ENCODE measurements at regions of chr18 and their contacts with region 1.

Region 1: DNA sequence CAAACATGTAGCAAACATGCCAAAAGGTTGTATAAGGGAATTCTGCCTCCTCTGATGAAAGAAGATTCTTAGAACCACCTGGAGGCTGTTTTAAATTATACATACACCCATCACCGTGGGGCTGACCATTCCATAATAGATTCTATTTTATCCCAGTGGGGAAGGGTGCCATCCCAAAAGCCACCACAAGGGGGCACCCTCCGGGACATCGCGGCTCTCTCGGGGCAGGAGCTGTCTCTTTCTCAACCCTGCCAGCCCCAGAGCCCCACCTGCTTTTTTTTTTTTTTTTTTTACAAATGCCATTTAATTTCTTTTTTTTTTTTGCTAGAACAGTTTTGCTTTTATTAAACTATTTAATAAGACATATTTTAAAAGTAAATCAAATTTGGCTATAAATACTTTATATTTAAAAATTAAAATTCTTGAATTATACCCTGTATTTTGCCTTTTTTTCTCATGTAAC is 8.6 kb upstream of the MTCL1 start:
- DNase-seq: peak; percentile 66
- H3K4me3 ChIP-seq: no peak overlapping the region
- H3K27ac ChIP-seq: no peak overlapping the region
- H3K4me1 ChIP-seq: no peaks in the 10 kb centered on the region
- H3K27me3 ChIP-seq: peaks cover 0 to 2% of the 10 kb centered on the region in 2 experiments
- CTCF ChIP-seq: peak; percentile 83 to 89
- POLR2A ChIP-seq: no peak

Region 2: DNA sequence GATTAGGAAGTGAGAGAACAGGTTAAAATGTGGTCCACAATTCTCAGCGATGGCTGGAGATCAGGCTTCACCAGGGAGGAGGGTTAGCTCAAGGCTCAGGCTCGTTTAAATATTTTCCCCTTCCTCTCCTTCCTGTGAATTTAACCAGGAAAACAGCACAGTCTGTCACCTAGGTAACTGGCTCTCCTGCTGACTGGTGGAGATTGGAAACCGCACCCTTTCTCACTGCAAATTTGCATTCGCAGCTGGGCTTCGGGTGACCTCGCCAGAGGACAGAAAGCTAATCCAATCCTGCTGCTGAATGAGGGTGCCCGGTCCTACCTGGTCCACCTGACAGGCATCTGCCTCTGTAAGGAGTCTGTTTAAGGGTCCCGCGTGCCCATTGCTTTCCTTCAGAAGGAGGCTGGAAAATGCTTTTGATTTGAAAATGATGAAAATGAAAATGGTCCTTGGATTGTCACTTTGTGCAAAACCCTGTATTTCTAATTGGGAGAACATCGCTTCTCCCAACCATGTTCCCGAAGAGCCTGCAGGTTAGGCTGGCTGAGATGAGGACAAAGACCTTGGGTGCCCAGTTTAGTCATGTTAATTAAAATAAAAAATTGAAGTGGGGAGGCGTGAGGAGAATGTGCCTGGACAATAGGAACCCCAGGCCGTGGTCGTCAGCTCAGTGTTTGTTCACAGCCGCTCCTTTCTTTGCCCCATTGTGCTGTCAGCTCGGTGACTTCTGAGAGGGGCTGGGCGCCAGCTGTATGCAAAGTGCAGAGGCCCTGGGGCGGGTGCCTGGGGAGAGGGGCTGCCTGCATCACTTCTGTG is 34.8 kb before region 1 on chr18:
- CTCF ChIA-PET with region 1: interaction called, 40 read pairs
- POLR2A ChIA-PET with region 1: no interaction called
- dilution Hi-C with region 1: no loop called
- intact Hi-C with region 1: no loop called
- DNase-seq: peak; percentile 68
- H3K4me3 ChIP-seq: peak overlapping the region in 1 of 3 experiments; percentile 23
- H3K27ac ChIP-seq: peak overlapping the region; percentile 37
- H3K4me1 ChIP-seq: peaks cover 26% of the 10 kb centered on the region
- H3K27me3 ChIP-seq: no peaks in the 10 kb centered on the region
- CTCF ChIP-seq: no peak
- POLR2A ChIP-seq: no peak

Region 3: GRCh38 chr18:8675057-8675456 is 21.7 kb before region 1 on chr18:
- CTCF ChIA-PET with region 1: interaction called, 17 read pairs
- POLR2A ChIA-PET with region 1: no interaction called
- dilution Hi-C with region 1: no loop called
- intact Hi-C with region 1: no loop called
- DNase-seq: no peak
- H3K4me3 ChIP-seq: no peak overlapping the region
- H3K27ac ChIP-seq: no peak overlapping the region
- H3K4me1 ChIP-seq: no peaks in the 10 kb centered on the region
- H3K27me3 ChIP-seq: no peaks in the 10 kb centered on the region
- CTCF ChIP-seq: no peak
- POLR2A ChIP-seq: no peak

Region 4: GRCh38 chr18:8786478-8787370 is 89.9 kb after region 1 on chr18:
- CTCF ChIA-PET with region 1: interaction called, 10 read pairs
- POLR2A ChIA-PET with region 1: no interaction called
- dilution Hi-C with region 1: no loop called
- intact Hi-C with region 1: no loop called
- DNase-seq: no peak
- H3K4me3 ChIP-seq: no peak overlapping the region
- H3K27ac ChIP-seq: peak overlapping the region; percentile 61
- H3K4me1 ChIP-seq: peaks cover 19% of the 10 kb centered on the region
- H3K27me3 ChIP-seq: no peaks in the 10 kb centered on the region
- CTCF ChIP-seq: no peak
- POLR2A ChIP-seq: no peak

Region 5: DNA sequence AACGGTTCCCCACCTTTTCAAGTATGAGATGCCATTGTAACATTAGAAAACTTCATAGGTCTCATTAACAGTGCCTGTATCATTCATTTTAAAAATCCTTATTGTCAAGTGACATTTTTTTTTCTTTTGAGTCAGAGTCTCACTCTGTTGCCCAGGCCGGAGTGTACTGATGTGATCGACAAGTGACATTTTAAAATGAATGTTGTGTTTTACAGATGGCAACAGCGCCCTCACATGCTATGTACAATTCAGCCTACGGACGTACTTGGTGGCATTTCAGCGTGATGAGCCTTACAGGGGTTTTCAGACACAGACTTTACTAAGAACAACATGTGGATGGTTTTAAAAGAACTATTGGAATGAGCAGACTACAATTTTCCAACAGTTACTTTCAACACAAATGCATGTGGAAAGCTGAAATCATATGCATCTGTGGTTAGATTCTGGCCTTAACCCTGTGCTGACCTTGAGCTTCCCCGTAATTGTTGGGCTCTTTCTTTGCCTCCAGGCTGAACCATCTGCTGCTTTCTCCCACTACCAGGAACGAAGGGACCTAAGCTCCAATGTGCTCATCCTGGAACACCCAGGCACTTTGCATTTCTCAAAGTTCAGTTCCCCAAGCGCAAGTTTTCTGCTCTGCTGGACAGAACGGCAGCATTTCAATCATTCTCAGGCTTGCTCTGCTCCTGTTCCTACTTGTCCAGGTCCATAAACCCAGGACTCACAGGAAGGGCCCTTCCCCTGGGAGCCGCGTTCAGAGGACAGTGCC is 285.8 kb after region 1 on chr18:
- CTCF ChIA-PET with region 1: interaction called, 95 read pairs
- POLR2A ChIA-PET with region 1: interaction called, 3 read pairs
- dilution Hi-C with region 1: no loop called
- intact Hi-C with region 1: loop called (anchors 1 kb)
- DNase-seq: peak; percentile 58
- H3K4me3 ChIP-seq: no peak overlapping the region
- H3K27ac ChIP-seq: no peak overlapping the region
- H3K4me1 ChIP-seq: no peaks in the 10 kb centered on the region
- H3K27me3 ChIP-seq: no peaks in the 10 kb centered on the region
- CTCF ChIP-seq: peak; percentile 39 to 40
- POLR2A ChIP-seq: no peak

Region 6: DNA sequence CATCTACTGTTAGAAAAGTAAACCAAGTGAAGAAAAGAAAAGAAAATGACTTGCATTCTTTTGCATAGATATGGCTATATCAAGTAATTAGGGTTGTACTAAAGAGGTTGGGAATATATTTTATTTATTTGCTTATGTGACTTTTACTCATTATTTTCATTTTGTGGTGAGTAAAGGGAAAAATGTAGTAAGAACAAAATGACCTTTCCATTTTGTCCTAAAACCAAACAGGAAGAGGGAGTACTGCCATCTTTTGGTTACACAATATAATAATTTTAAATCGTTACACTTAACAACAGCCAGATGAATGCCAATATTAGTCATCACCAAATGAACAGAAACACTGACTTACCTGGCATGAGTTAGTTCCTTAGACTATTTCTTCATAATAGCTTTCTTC is 358.4 kb after region 1 on chr18:
- CTCF ChIA-PET with region 1: interaction called, 5 read pairs
- POLR2A ChIA-PET with region 1: no interaction called
- dilution Hi-C with region 1: no loop called
- intact Hi-C with region 1: loop called (anchors 2 kb)
- DNase-seq: peak; percentile 81
- H3K4me3 ChIP-seq: no peak overlapping the region
- H3K27ac ChIP-seq: no peak overlapping the region
- H3K4me1 ChIP-seq: peaks cover 9% of the 10 kb centered on the region
- H3K27me3 ChIP-seq: no peaks in the 10 kb centered on the region
- CTCF ChIP-seq: no peak
- POLR2A ChIP-seq: no peak